Prostate gland (tissue), 2 donors: ENCODE measurements at regions of chr12 and their contacts with region 1.

Region 1: DNA sequence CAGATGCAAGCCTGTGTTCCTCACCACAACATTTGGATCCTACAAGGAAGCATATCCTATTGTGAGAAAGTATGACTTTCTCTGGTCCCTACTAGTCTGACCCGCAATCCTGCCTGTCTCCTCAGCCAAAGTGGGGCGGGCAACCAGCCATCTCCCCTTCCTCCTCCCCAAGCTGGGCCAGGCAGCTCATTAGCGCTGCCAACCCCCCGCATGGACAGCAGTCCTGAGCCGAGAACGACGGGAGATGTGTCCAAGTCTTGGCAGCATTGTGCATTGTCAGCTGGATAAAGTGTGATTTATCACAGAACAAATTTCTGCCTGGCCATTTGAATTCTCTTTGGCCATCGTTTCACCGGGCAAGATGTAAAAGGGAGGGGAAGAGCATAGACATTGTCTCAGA is 139.4 kb downstream of the SLC15A4 start:
- DNase-seq: no peak
- H3K4me3 ChIP-seq: no peak overlapping the region
- H3K27ac ChIP-seq: no peak overlapping the region
- H3K4me1 ChIP-seq: no peaks in the 10 kb centered on the region
- H3K27me3 ChIP-seq: no peaks in the 10 kb centered on the region
- CTCF ChIP-seq: no peak
- POLR2A ChIP-seq: no peak

Region 2: GRCh38 chr12:128266541-128267296 is 417.6 kb before region 1 on chr12 and contains the start of gene TMEM132C:
- intact Hi-C with region 1: no loop called
- DNase-seq: no peak
- H3K4me3 ChIP-seq: peak within 1 kb of the TSS; percentile 20 to 21
- H3K27ac ChIP-seq: no peak within 1 kb of the TSS
- H3K4me1 ChIP-seq: peaks cover 5% of the 10 kb centered on the region
- H3K27me3 ChIP-seq: peaks cover 12% of the 10 kb centered on the region
- CTCF ChIP-seq: no peak
- POLR2A ChIP-seq: no peak
- total RNA-seq, gene TMEM132C: 0.46 to 5.3 TPM

Region 3: GRCh38 chr12:128823916-128824839 is 139.8 kb after region 1 on chr12 and contains the start of gene SLC15A4:
- intact Hi-C with region 1: loop called (anchors 5 kb)
- DNase-seq: peak; percentile 97
- H3K4me3 ChIP-seq: peak within 1 kb of the TSS; percentile 81 to 84
- H3K27ac ChIP-seq: peak within 1 kb of the TSS; percentile 78 to 81
- H3K4me1 ChIP-seq: peaks cover 10% of the 10 kb centered on the region
- H3K27me3 ChIP-seq: no peaks in the 10 kb centered on the region
- CTCF ChIP-seq: no peak
- POLR2A ChIP-seq: peak; percentile 84
- total RNA-seq, gene SLC15A4: 33.5 to 51.5 TPM

Region 4: GRCh38 chr12:129276361-129277060 is 592.2 kb after region 1 on chr12:
- intact Hi-C with region 1: no loop called
- DNase-seq: no peak
- H3K4me3 ChIP-seq: no peak overlapping the region
- H3K27ac ChIP-seq: no peak overlapping the region
- H3K4me1 ChIP-seq: no peaks in the 10 kb centered on the region
- H3K27me3 ChIP-seq: no peaks in the 10 kb centered on the region
- CTCF ChIP-seq: no peak
- POLR2A ChIP-seq: no peak